IMR-90 (cell line): ENCODE measurements at regions of chrX and their contacts with region 1.

Region 1: GRCh38 chrX:19904778-19905367 is 17.5 kb upstream of the SH3KBP1 start:
- DNase-seq: peak; percentile 63
- ATAC-seq: peak; percentile 80
- H3K4me3 ChIP-seq: no peak overlapping the region
- H3K27ac ChIP-seq: no peak overlapping the region
- H3K4me1 ChIP-seq: no peaks in the 10 kb centered on the region
- H3K27me3 ChIP-seq: no peaks in the 10 kb centered on the region
- CTCF ChIP-seq: peak; percentile 66
- POLR2A ChIP-seq: no peak
- RAD21 ChIP-seq: peak; percentile 72

Region 2: GRCh38 chrX:19673375-19674040 is 231.4 kb before region 1 on chrX:
- CTCF ChIA-PET with region 1: no interaction called
- POLR2A ChIA-PET with region 1: no interaction called
- dilution Hi-C with region 1: no loop called
- in situ Hi-C with region 1: no loop called
- intact Hi-C with region 1: no loop called
- DNase-seq: peak; percentile 95
- ATAC-seq: peak; percentile 66
- H3K4me3 ChIP-seq: no peak overlapping the region
- H3K27ac ChIP-seq: peak overlapping the region; percentile 44
- H3K4me1 ChIP-seq: peaks cover 4% of the 10 kb centered on the region
- H3K27me3 ChIP-seq: no peaks in the 10 kb centered on the region
- CTCF ChIP-seq: no peak
- POLR2A ChIP-seq: no peak
- RAD21 ChIP-seq: no peak

Region 3: DNA sequence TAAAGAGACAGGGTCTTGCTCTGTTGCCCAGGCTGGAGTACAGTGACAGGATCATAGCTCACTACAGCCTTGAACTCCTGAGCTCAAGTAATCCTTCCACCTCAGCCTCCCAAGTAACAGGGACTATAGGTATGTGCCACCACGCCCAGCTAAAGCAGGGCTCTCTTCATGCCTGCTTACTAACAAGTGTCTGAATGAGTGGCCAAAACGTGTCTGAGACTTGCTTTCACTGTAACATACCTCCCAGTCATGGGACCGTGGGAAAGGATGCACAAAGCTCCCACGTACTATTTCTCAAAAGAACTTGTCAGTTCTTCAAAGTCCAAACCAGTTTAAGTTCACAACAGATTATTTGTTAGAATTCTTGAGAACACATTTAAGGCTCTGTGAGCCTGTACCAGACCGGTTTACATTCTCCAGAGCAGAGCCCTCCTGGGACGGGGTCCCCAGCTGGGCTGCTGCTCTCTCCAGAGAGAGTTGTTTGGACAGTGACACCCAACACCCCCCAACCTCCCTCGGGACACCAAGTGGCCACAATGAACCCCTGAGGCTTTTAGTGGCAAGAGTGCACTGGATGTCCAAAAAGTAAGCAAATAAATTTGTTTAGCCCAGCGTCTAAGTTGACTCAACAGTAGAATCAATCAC is 41.5 kb before region 1 on chrX:
- CTCF ChIA-PET with region 1: no interaction called
- POLR2A ChIA-PET with region 1: no interaction called
- dilution Hi-C with region 1: no loop called
- in situ Hi-C with region 1: no loop called
- intact Hi-C with region 1: no loop called
- DNase-seq: peak; percentile 29
- ATAC-seq: no peak
- H3K4me3 ChIP-seq: no peak overlapping the region
- H3K27ac ChIP-seq: no peak overlapping the region
- H3K4me1 ChIP-seq: peaks cover 13% of the 10 kb centered on the region
- H3K27me3 ChIP-seq: no peaks in the 10 kb centered on the region; the same call in 1 of the 2 replicates
- CTCF ChIP-seq: no peak
- POLR2A ChIP-seq: no peak
- RAD21 ChIP-seq: no peak

Region 4: DNA sequence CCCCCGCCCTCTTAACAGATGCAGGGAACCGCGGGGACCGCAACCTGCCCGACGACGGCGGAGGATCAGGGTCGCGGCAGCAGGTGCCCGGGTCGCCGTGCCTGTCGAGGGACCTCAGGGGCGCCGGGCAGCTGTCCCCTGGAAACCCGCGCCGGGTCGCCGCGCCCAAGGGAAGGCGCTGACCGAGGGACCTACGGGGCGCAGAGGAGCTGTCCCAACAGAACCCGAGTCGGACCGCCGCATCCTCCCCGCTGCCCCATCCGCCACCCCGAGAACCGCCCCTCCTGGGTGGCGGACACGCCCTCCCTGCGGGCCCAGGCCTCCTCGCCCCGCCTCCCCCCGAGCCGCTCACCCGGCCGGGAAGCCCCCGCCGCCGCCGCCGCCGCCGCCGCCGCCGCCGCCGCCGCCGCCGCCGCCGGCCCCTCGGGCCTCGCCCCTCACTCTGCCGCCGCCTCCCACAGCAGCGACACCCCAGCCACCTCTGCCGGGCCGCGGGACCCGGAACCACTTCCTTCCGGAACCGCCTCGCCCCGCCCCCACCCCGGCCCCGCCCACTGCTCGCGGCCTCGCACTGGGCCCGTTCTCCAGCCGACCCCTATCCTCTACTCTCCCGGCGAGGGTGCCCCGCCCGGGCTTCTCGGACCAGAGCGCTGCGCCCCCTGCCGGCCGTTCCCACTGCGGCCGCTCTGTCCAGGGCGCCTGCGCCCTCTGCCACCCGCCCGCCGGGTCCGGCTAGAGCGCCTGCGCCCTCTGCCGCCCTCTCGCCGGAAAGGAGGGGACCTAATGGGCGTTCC is 85.9 kb after region 1 on chrX and contains the start of gene BCLAF3:
- CTCF ChIA-PET with region 1: no interaction called
- POLR2A ChIA-PET with region 1: no interaction called
- dilution Hi-C with region 1: no loop called
- in situ Hi-C with region 1: no loop called
- intact Hi-C with region 1: loop called (anchors 1 kb)
- DNase-seq: peak; percentile 79
- ATAC-seq: peak; percentile 97
- H3K4me3 ChIP-seq: peak within 1 kb of the TSS; percentile 83
- H3K27ac ChIP-seq: peak within 1 kb of the TSS; percentile 56
- H3K4me1 ChIP-seq: no peaks in the 10 kb centered on the region; the same call in 1 of the 2 replicates
- H3K27me3 ChIP-seq: no peaks in the 10 kb centered on the region; the same call in 1 of the 2 replicates
- CTCF ChIP-seq: peak; percentile 86
- POLR2A ChIP-seq: no peak
- RAD21 ChIP-seq: peak; percentile 53
- total RNA-seq, gene BCLAF3: 1.6 and 2.8 TPM in 2 replicates

Region 5: GRCh38 chrX:20116579-20117240 is 211.8 kb after region 1 on chrX and contains the start of gene MAP7D2:
- CTCF ChIA-PET with region 1: no interaction called
- POLR2A ChIA-PET with region 1: no interaction called
- dilution Hi-C with region 1: no loop called
- in situ Hi-C with region 1: no loop called
- intact Hi-C with region 1: loop called (anchors 2 kb)
- DNase-seq: no peak
- ATAC-seq: peak; percentile 42
- H3K4me3 ChIP-seq: no peak within 1 kb of the TSS; the same call in 1 of the 2 replicates
- H3K27ac ChIP-seq: no peak within 1 kb of the TSS
- H3K4me1 ChIP-seq: no peaks in the 10 kb centered on the region
- H3K27me3 ChIP-seq: peaks cover 32% of the 10 kb centered on the region
- CTCF ChIP-seq: no peak
- POLR2A ChIP-seq: no peak
- RAD21 ChIP-seq: no peak
- total RNA-seq, gene MAP7D2: under 0.01 and 0.18 TPM in 2 replicates